ENCODE measurements at regions of chr19 and their contacts with region 1.

Region 1: GRCh38 chr19:10864538-10864899 is 6.8 kb upstream of the CARM1 start:
- DNase-seq: peak; percentile 66 to 77 (median 71)
- H3K4me3 ChIP-seq: peak overlapping the region in 1 of 7 experiments; percentile 40
- H3K27ac ChIP-seq: no peak overlapping the region
- H3K4me1 ChIP-seq: peaks cover 0 to 4% (median 3%) of the 10 kb centered on the region in 4 experiments
- H3K27me3 ChIP-seq: no peaks in the 10 kb centered on the region

Region 2: GRCh38 chr19:10828981-10829821 is 35.3 kb before region 1 on chr19:
- CTCF ChIA-PET with region 1: interaction called, 31 read pairs
- POLR2A ChIA-PET with region 1: no interaction called
- DNase-seq: peak in 2 of 3 donors; percentile 24 to 33
- H3K4me3 ChIP-seq: no peak overlapping the region
- H3K27ac ChIP-seq: no peak overlapping the region
- H3K4me1 ChIP-seq: no peaks in the 10 kb centered on the region
- H3K27me3 ChIP-seq: no peaks in the 10 kb centered on the region

Region 3: GRCh38 chr19:10881403-10882107 is 17.0 kb after region 1 on chr19:
- CTCF ChIA-PET with region 1: interaction called, 11 read pairs
- POLR2A ChIA-PET with region 1: no interaction called
- DNase-seq: no peak
- H3K4me3 ChIP-seq: no peak overlapping the region
- H3K27ac ChIP-seq: no peak overlapping the region
- H3K4me1 ChIP-seq: peaks cover 0 to 11% (median 3%) of the 10 kb centered on the region in 4 experiments
- H3K27me3 ChIP-seq: no peaks in the 10 kb centered on the region